Activated CD4-positive, alpha-beta memory T cell treated with anti-CD3 and anti-CD28 coated beads for 36 hours (primary cell): ENCODE measurements at regions of chr14 and their contacts with region 1.

Region 1: DNA sequence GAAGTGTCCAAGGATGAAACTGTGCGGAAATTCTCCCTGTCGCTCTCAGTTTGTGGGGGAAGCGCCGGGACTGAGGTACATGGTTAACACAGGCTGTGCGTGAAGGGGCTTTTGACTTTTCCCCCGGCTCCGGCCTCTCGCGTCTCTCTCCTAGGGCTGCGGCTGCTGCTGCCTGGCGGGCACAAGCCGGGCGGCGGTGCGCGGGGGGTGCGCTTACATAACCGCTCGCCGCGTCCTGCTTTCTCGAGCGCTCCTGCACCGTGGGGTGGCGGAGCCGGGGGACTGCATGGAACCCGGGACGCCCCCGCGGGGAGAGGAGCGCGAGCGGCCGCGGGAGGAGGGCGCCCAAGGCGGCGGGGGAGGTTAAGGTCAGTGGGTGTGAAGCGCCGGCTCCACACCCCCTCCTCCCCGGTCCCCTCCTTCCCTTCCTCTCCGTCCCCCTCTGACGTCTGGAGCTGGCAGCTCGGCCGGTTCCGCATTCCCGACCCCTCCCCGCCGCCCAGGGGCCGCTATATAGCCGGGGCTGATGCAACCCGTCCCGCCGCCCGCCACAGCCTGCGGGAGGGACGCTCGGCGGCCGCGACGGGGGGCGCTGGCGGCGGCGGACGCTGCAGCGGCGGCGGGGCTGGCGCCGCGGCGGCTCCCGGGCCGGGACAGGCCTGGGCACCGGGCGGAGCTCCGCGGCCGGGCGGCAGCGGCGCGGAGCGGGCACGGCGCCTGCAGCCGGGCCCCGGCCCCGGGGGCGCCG is at the start of gene JDP2:
- DNase-seq: peak; percentile 55
- H3K4me3 Mint-ChIP-seq: peak within 1 kb of the TSS; percentile 70
- H3K27ac Mint-ChIP-seq: no peak within 1 kb of the TSS
- H3K4me1 Mint-ChIP-seq: peaks cover 12% of the 10 kb centered on the region
- H3K27me3 Mint-ChIP-seq: peaks cover 19% of the 10 kb centered on the region
- total RNA-seq, gene JDP2: 1.7 to 1.8 TPM

Region 2: GRCh38 chr14:75333606-75334548 is 93.8 kb before region 1 on chr14:
- CTCF ChIA-PET with region 1: interaction called, 3 read pairs
- POLR2A ChIA-PET with region 1: no interaction called
- intact Hi-C with region 1: loop called (anchors 1 kb)
- DNase-seq: peak; percentile 65
- H3K4me3 Mint-ChIP-seq: peak overlapping the region; percentile 60
- H3K27ac Mint-ChIP-seq: peak overlapping the region; percentile 80
- H3K4me1 Mint-ChIP-seq: peaks cover 30% of the 10 kb centered on the region
- H3K27me3 Mint-ChIP-seq: no peaks in the 10 kb centered on the region

Region 3: GRCh38 chr14:75443203-75443969 is 15.7 kb after region 1 on chr14:
- CTCF ChIA-PET with region 1: no interaction called
- POLR2A ChIA-PET with region 1: no interaction called
- intact Hi-C with region 1: no loop called
- DNase-seq: no peak
- H3K4me3 Mint-ChIP-seq: no peak overlapping the region
- H3K27ac Mint-ChIP-seq: no peak overlapping the region
- H3K4me1 Mint-ChIP-seq: no peaks in the 10 kb centered on the region
- H3K27me3 Mint-ChIP-seq: no peaks in the 10 kb centered on the region